Caco-2 (cell line): ENCODE measurements at regions of chr6 and their contacts with region 1.

Region 1: DNA sequence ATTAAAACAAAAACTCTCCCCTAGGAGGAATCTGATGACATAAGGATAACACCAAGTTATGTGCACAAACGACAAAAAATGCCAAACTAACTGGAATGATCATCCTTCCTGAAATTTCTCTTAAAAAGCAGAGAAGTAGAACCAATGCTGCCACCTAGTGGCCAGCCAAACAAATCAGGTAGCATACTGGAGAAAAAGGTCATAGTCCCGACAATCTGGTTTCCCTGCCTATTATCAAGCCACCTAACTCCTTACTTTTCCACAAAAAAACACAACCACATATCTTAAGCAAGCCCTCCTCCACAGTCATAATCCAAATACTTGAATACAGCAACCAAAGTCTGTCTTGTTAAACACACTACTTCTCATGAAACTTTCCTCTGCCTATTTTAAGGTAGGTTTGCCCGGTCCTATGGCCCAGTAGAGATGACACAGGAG is 5.3 kb downstream of the OARD1 start:
- DNase-seq: peak; percentile 72 to 79
- H3K4me3 ChIP-seq: no peak overlapping the region
- H3K4me3 Mint-ChIP-seq: peak overlapping the region; percentile 54
- H3K27ac Mint-ChIP-seq: peak overlapping the region; percentile 77
- H3K4me1 ChIP-seq: peaks cover 61% of the 10 kb centered on the region
- H3K4me1 Mint-ChIP-seq: peaks cover 56% of the 10 kb centered on the region
- H3K27me3 ChIP-seq: no peaks in the 10 kb centered on the region
- H3K27me3 Mint-ChIP-seq: no peaks in the 10 kb centered on the region
- CTCF ChIP-seq: peak; percentile 70 to 78

Region 2: GRCh38 chr6:40719671-40720374 is 347.1 kb before region 1 on chr6:
- CTCF ChIA-PET with region 1: no interaction called
- POLR2A ChIA-PET with region 1: no interaction called
- intact Hi-C with region 1: loop called (anchors 10 kb)
- DNase-seq: no peak
- H3K4me3 ChIP-seq: no peak overlapping the region
- H3K4me3 Mint-ChIP-seq: no peak overlapping the region
- H3K27ac Mint-ChIP-seq: peak overlapping the region; percentile 5
- H3K4me1 ChIP-seq: peaks cover 37% of the 10 kb centered on the region
- H3K4me1 Mint-ChIP-seq: peaks cover 36% of the 10 kb centered on the region
- H3K27me3 ChIP-seq: no peaks in the 10 kb centered on the region
- H3K27me3 Mint-ChIP-seq: no peaks in the 10 kb centered on the region
- CTCF ChIP-seq: no peak

Region 3: GRCh38 chr6:40930555-40930954 is 136.3 kb before region 1 on chr6:
- CTCF ChIA-PET with region 1: no interaction called
- POLR2A ChIA-PET with region 1: no interaction called
- intact Hi-C with region 1: no loop called
- DNase-seq: peak; percentile 27 to 48
- H3K4me3 ChIP-seq: no peak overlapping the region
- H3K4me3 Mint-ChIP-seq: no peak overlapping the region
- H3K27ac Mint-ChIP-seq: no peak overlapping the region
- H3K4me1 ChIP-seq: peaks cover 8% of the 10 kb centered on the region; the same call in 1 of the 2 replicates
- H3K4me1 Mint-ChIP-seq: no peaks in the 10 kb centered on the region
- H3K27me3 ChIP-seq: no peaks in the 10 kb centered on the region
- H3K27me3 Mint-ChIP-seq: no peaks in the 10 kb centered on the region
- CTCF ChIP-seq: no peak

Region 4: DNA sequence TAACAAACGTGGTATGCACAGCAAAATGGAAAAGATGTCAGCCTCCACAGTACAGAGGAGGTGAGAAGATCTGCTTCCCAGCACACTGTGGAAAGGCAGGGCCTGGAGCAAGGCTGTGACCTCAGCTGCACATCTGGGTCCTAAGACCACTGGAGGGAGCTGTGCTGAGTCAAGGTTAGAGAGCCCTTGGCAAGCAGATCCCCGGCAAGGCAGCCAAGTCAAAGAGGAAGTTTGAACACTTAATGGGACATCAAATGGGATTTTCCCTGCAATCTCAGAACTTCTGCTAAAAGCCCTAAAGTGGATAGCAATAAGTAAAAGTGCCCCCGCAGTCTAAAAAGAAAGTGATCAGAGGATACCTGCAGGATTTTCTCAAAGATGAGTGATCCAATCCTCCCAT is 67.3 kb before region 1 on chr6:
- CTCF ChIA-PET with region 1: interaction called, 9 read pairs
- POLR2A ChIA-PET with region 1: no interaction called
- intact Hi-C with region 1: loop called (anchors 1 kb)
- DNase-seq: peak; percentile 61 to 73
- H3K4me3 ChIP-seq: no peak overlapping the region
- H3K4me3 Mint-ChIP-seq: no peak overlapping the region
- H3K27ac Mint-ChIP-seq: peak overlapping the region; percentile 99
- H3K4me1 ChIP-seq: peaks cover 44% of the 10 kb centered on the region
- H3K4me1 Mint-ChIP-seq: peaks cover 53% of the 10 kb centered on the region
- H3K27me3 ChIP-seq: no peaks in the 10 kb centered on the region
- H3K27me3 Mint-ChIP-seq: no peaks in the 10 kb centered on the region
- CTCF ChIP-seq: peak in 1 of 2 experiments; percentile 44

Region 5: DNA sequence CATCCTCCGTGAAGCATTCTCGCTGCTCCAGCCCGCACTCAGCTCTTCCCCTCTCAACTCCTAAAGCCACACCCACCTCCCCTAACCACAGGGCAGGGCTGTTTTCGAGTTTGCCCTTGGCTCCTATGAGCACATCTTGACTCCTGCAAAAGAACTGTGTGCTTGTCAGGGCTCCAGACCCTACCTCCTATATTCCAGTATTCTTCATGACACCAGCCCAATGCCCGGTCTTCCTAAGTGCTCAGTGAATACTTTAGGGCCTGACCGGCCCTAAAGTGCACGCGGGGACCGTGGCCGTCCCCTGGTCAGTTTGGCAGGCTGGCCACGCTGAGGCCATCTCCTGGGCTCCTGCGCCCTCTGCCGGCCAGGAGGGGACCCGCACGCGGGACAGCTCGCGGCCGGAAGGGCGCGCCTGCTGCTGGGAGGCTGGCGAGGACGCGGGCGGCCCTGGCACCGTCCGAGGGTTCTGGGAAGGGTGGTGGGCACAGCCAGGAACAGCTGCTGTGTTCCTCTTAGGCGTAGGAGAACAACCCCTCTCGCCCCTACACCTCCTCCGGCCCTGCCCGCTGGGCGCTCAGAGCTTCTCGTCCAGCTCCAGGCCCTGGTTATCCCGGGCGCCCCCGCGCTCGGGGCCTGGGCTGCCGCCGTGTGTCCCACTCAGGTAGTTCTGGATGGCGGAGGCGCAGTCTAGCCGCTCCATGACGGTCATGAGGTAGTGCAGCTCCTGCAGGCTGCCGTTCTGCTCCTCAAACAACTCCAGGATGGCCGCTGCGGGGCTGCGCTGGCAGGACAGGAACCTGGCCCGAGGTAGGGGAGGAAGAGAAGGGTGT is 38.9 kb before region 1 on chr6:
- CTCF ChIA-PET with region 1: interaction called, 3 read pairs
- POLR2A ChIA-PET with region 1: no interaction called
- intact Hi-C with region 1: loop called (anchors 5 kb)
- DNase-seq: peak in 1 of 2 experiments; percentile 44
- H3K4me3 ChIP-seq: no peak overlapping the region
- H3K4me3 Mint-ChIP-seq: peak overlapping the region; percentile 63
- H3K27ac Mint-ChIP-seq: no peak overlapping the region
- H3K4me1 ChIP-seq: 0 out of 2 replicates have a peak, but pooled peaks cover 4% of the 10 kb centered on the region
- H3K4me1 Mint-ChIP-seq: peaks cover 6% of the 10 kb centered on the region
- H3K27me3 ChIP-seq: no peaks in the 10 kb centered on the region
- H3K27me3 Mint-ChIP-seq: no peaks in the 10 kb centered on the region
- CTCF ChIP-seq: peak; percentile 29 to 46

Region 6: DNA sequence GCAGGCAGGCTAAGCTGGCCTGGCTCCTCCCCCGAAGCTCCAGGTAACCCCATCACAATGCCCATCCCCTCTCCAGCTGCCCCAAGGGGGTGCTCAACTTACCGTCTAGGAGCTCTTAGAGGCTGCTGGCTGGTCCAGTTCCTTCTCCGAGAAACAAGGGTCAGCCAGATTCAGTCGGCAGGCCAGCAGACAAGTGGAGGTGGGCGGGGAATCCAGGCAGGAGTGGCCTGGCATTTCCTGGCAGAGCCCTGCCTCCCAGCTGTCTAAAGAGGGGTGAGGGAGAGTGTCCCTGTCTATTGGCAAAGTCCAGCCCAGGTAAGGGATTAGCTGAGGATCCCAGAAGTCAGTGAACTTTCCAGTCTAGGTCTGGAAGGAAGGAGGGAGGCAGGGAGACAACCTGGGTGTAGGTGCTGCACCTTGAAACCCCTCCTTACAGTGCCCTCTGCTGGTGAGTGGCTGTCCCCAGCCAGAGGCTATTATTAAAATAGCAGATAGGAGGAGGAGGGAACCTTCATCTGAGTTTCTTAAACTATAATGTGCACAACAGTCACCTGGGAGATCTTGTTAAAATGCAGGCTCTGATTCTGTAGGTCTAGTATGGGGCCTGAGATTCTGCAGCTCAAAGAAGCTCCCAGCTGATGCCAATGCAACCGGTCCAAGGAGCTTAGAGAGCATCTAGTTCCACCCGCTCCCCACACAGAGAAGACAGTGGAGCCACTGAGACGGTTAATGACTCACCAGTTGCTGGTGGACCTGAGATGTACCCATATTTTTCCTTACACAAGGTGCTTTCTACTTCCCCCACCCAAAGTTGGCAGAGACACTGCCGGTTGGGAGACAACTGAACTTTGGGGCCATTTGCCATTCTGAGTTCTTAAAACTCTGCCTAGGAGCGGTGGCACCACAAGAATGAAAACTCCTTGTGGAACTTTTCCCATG is 27.6 kb before region 1 on chr6 and contains the start of gene UNC5CL:
- CTCF ChIA-PET with region 1: interaction called, 10 read pairs
- POLR2A ChIA-PET with region 1: interaction called, 16 read pairs
- intact Hi-C with region 1: loop called (anchors 1 kb)
- DNase-seq: peak; percentile 83 to 84
- H3K4me3 ChIP-seq: no peak within 1 kb of the TSS
- H3K4me3 Mint-ChIP-seq: peak within 1 kb of the TSS; percentile 63
- H3K27ac Mint-ChIP-seq: peak within 1 kb of the TSS; percentile 96
- H3K4me1 ChIP-seq: peaks cover 59% of the 10 kb centered on the region
- H3K4me1 Mint-ChIP-seq: peaks cover 41% of the 10 kb centered on the region
- H3K27me3 ChIP-seq: no peaks in the 10 kb centered on the region
- H3K27me3 Mint-ChIP-seq: no peaks in the 10 kb centered on the region
- CTCF ChIP-seq: peak; percentile 57 to 65
- total RNA-seq, gene UNC5CL: 4.5 and 5.5 TPM in 2 replicates

Region 7: GRCh38 chr6:41049521-41049920 is 17.4 kb before region 1 on chr6:
- CTCF ChIA-PET with region 1: interaction called, 3 read pairs
- POLR2A ChIA-PET with region 1: no interaction called
- intact Hi-C with region 1: loop called (anchors 1 kb)
- DNase-seq: peak; percentile 69 to 85
- H3K4me3 ChIP-seq: no peak overlapping the region
- H3K4me3 Mint-ChIP-seq: peak overlapping the region; percentile 48
- H3K27ac Mint-ChIP-seq: peak overlapping the region; percentile 64
- H3K4me1 ChIP-seq: peaks cover 96% of the 10 kb centered on the region
- H3K4me1 Mint-ChIP-seq: peaks cover 80% of the 10 kb centered on the region
- H3K27me3 ChIP-seq: no peaks in the 10 kb centered on the region
- H3K27me3 Mint-ChIP-seq: no peaks in the 10 kb centered on the region
- CTCF ChIP-seq: no peak